Activated B cell treated with CpG ODN at 0.5 μM for 24 hours (primary cell): ENCODE measurements at regions of chr10 and their contacts with region 1.

Region 1: DNA sequence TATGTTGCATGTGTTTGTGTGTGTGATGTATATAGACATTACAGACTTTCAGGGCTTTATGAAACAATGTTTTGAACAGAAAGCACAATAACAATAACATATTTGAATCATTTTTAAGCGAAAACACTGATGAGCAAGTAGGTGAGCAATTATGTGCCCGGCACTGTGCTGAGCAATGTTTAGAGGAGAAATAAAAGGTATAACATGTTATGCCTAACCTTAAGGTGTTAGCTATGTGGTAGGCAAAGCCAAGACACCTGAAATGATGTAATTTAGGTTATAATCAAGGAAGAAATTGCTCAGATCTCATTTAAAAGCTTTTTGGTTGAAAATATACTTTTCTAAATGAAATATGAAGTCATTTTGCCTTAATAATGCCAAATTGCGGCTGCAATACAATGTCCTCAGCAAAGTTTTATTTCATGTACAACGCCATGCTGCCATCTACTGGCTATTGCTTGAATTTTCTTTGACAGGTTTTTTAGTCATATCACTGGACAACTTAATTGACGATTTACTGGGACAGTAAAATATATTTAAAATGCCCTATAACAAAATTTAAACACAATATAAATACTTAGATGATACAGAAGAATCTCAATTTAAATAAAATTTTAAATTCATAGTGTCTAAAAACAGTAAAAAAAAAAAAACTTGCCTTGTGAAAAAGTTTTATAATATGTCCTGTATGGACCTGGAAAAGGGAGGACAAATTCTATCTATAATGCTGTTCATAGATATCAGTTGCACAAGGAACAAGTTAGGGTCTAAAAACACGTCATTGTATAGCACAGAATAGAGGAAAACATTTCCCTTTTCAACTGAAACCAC is 131.1 kb upstream of the CDK1 start:
- DNase-seq: no peak
- ATAC-seq: peak; percentile 42
- H3K4me3 Mint-ChIP-seq: no peak overlapping the region
- H3K27ac Mint-ChIP-seq: no peak overlapping the region
- H3K4me1 Mint-ChIP-seq: peaks cover 1% of the 10 kb centered on the region
- H3K27me3 Mint-ChIP-seq: no peaks in the 10 kb centered on the region
- CTCF ChIP-seq: peak; percentile 79

Region 2: DNA sequence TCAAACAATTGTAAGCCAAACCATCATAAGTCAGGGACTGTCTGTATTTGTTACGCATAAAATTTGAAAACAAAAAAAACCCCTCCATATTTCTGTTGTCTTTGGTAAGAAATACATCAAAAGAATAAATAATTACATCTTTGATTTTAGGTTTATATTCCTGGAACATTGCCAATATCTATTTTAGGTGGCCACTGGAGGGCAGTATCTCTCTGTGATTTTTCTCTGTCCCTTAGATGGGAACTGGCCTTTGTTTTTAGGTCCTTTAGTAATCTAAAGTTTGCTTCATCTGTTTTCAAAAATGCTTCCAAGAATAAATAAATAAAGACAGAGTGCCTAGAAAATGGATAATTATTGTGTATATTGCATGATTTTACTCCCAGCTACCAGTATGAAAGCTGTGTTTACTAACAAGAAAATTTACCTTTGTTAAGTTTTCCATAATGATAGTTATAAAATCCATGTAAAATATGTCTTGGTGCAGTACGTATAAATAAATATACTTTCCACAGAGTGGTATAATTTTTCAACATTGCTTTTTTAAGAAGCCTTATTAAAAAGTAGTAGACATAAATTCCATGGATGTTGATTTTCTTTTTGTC is 1406.5 kb before region 1 on chr10:
- CTCF ChIA-PET with region 1: no interaction called
- POLR2A ChIA-PET with region 1: no interaction called
- intact Hi-C with region 1: loop called (anchors 2 kb)
- DNase-seq: no peak
- ATAC-seq: no peak
- H3K4me3 Mint-ChIP-seq: no peak overlapping the region
- H3K27ac Mint-ChIP-seq: no peak overlapping the region
- H3K4me1 Mint-ChIP-seq: no peaks in the 10 kb centered on the region
- H3K27me3 Mint-ChIP-seq: peaks cover 11% of the 10 kb centered on the region
- CTCF ChIP-seq: no peak

Region 3: GRCh38 chr10:59808896-59809643 is 838.1 kb before region 1 on chr10:
- CTCF ChIA-PET with region 1: no interaction called
- POLR2A ChIA-PET with region 1: no interaction called
- intact Hi-C with region 1: loop called (anchors 5 kb)
- DNase-seq: peak; percentile 41
- ATAC-seq: peak; percentile 92
- H3K4me3 Mint-ChIP-seq: no peak overlapping the region
- H3K27ac Mint-ChIP-seq: no peak overlapping the region
- H3K4me1 Mint-ChIP-seq: peaks cover 17% of the 10 kb centered on the region
- H3K27me3 Mint-ChIP-seq: no peaks in the 10 kb centered on the region
- CTCF ChIP-seq: no peak

Region 4: DNA sequence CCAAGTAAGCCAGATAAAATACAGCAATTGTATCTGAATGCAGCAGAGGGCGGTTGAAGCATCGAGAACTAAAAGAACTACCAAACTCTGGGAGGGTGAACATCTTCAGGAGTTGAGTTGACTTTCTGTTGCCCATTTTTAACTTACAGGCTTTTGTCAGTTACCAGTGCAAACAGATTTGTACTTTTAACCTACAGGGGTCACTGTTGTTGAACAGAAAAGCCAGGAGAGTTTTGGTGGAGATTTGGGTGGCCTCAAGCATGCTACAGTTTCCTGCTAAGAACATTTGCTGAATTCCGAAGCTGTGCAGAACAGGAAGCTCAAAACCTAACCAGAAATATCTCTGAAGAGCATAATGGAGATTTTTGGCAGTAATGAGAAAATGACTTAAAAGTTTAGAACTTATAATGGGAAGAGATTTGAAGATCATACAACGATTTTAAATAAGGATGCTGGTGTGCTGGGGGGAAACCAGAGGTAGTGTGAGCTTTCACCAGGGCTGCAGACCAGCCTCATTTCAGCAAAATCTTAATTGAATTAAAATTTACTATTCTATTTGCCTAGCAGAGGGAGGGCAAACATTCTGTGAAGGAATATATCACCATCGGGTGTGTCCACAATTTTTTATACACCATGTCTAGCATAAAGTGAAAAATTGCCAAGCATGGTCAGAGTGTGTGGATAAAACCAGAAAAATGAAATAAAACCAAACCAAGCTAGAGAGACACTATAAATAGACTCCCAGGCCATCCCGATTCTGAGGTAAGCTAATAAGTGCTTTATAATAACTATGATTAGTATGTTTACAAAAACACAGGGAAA is 532.2 kb before region 1 on chr10:
- CTCF ChIA-PET with region 1: interaction called, 18 read pairs
- POLR2A ChIA-PET with region 1: no interaction called
- intact Hi-C with region 1: loop called (anchors 1 kb)
- DNase-seq: no peak
- ATAC-seq: peak; percentile 64
- H3K4me3 Mint-ChIP-seq: no peak overlapping the region
- H3K27ac Mint-ChIP-seq: no peak overlapping the region
- H3K4me1 Mint-ChIP-seq: no peaks in the 10 kb centered on the region
- H3K27me3 Mint-ChIP-seq: no peaks in the 10 kb centered on the region
- CTCF ChIP-seq: no peak

Region 5: GRCh38 chr10:60549686-60550085 is 97.5 kb before region 1 on chr10:
- CTCF ChIA-PET with region 1: no interaction called
- POLR2A ChIA-PET with region 1: no interaction called
- intact Hi-C with region 1: loop called (anchors 2 kb)
- DNase-seq: no peak
- ATAC-seq: no peak
- H3K4me3 Mint-ChIP-seq: no peak overlapping the region
- H3K27ac Mint-ChIP-seq: no peak overlapping the region
- H3K4me1 Mint-ChIP-seq: no peaks in the 10 kb centered on the region
- H3K27me3 Mint-ChIP-seq: no peaks in the 10 kb centered on the region
- CTCF ChIP-seq: no peak

Region 6: DNA sequence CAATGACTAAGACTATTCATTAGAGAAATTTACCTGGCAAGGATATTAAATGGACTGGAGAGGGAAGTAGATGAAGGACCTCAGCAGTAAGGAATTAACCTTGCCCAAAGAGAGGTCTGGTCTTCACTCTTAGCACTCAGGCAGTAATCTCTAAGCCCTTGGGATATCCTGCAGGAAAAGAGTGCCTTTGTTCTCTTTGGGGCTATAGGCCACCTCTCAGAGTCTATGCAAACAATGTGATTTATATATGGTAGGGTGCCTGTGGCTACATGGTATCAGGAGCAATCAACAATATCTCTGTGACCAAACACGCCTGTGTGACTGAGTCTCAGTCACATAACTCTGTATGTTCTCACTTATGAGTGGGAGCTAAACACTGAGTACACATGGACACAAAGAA is 23.6 kb before region 1 on chr10:
- CTCF ChIA-PET with region 1: no interaction called
- POLR2A ChIA-PET with region 1: no interaction called
- intact Hi-C with region 1: no loop called
- DNase-seq: no peak
- ATAC-seq: no peak
- H3K4me3 Mint-ChIP-seq: no peak overlapping the region
- H3K27ac Mint-ChIP-seq: no peak overlapping the region
- H3K4me1 Mint-ChIP-seq: no peaks in the 10 kb centered on the region
- H3K27me3 Mint-ChIP-seq: no peaks in the 10 kb centered on the region
- CTCF ChIP-seq: no peak

Region 7: DNA sequence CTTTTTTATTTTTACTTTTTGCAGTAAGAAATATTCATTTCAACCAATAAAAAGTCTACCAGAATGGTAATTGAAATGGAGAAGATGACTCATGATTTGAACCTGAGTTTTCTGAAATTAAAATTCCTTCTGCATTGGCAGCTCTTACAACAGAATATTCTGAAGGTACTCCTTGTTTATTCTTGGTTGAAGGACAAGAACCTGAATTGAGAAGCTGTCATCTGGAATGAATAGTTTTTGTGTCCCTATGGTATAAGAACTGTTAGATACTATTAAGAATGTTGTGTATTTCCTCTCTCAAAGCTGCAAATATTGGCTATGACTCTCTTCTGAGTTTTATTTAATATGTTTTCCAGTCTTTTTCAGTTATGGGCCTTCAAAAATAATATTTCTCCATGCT is 187.2 kb after region 1 on chr10:
- CTCF ChIA-PET with region 1: no interaction called
- POLR2A ChIA-PET with region 1: no interaction called
- intact Hi-C with region 1: no loop called
- DNase-seq: no peak
- ATAC-seq: no peak
- H3K4me3 Mint-ChIP-seq: no peak overlapping the region
- H3K27ac Mint-ChIP-seq: no peak overlapping the region
- H3K4me1 Mint-ChIP-seq: no peaks in the 10 kb centered on the region
- H3K27me3 Mint-ChIP-seq: no peaks in the 10 kb centered on the region
- CTCF ChIP-seq: no peak